ENCODE measurements at regions of chr16 and their contacts with region 1.

Region 1: DNA sequence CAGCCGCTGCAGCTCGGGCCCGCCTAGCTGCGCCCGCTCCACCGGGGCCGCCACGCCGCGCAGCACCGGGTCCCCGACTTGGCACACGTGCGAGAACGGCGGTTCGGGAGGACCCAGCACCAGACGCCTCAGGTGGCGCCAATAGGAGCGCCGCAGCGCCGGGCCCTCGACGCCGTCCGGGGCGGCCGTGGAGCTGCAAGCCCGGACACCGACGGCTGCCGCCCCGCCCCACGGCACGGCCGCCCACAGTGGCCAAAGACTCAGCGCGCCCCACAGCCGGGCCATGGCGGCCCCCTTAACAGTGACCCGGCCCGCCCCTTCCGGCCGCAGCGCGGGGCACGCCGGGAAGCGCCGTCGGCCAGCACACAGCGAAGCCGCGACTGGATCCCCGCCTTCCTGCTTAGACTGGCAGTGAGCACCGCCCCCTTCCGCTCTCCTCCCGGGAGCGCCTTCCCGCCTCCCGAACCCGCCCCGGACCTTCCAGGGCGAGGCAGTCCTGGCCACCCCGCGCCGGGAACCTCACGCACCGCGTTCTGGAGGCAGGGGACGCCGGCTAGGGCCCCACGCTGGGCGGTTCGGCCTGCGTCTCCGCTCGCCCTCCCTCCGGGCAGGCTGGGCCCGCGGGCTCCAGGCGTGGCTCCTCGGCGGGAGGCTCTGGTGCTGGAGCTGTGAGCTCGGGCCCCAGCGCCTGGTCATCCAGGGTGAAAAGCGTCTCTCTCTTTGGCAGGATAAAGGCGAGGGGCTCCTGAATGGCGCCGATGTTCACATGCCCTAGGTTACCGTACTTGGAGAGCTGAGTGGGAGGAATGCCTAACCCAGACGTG is at the start of gene PDF:
- DNase-seq: peak; percentile 85
- ATAC-seq: peak; percentile 96
- H3K4me3 Mint-ChIP-seq: peak within 1 kb of the TSS; percentile 84
- H3K27ac Mint-ChIP-seq: peak within 1 kb of the TSS; percentile 71
- H3K4me1 Mint-ChIP-seq: peaks cover 38% of the 10 kb centered on the region
- H3K27me3 Mint-ChIP-seq: no peaks in the 10 kb centered on the region
- CTCF ChIP-seq: no peak
- total RNA-seq, gene PDF: 11.1 and 15.3 TPM in 2 replicates

Region 2: GRCh38 chr16:69465083-69465721 is 134.7 kb after region 1 on chr16:
- CTCF ChIA-PET with region 1: no interaction called
- POLR2A ChIA-PET with region 1: interaction called, 11 read pairs
- intact Hi-C with region 1: no loop called
- DNase-seq: no peak
- ATAC-seq: no peak
- H3K4me3 Mint-ChIP-seq: peak overlapping the region; percentile 1
- H3K27ac Mint-ChIP-seq: peak overlapping the region; percentile 69
- H3K4me1 Mint-ChIP-seq: peaks cover 36% of the 10 kb centered on the region
- H3K27me3 Mint-ChIP-seq: no peaks in the 10 kb centered on the region
- CTCF ChIP-seq: no peak